ENCODE measurements at regions of chr11 and their contacts with region 1.

Region 1: GRCh38 chr11:15006139-15006759 is 34.1 kb upstream of the CALCA start:
- DNase-seq: peak in 4 of 5 donors; percentile 30 to 48 (median 39)
- H3K4me3 ChIP-seq: no peak overlapping the region
- H3K4me3 Mint-ChIP-seq: no peak overlapping the region
- H3K27ac ChIP-seq: no peak overlapping the region
- H3K27ac Mint-ChIP-seq: no peak overlapping the region
- H3K4me1 ChIP-seq: no peaks in the 10 kb centered on the region
- H3K4me1 Mint-ChIP-seq: no peaks in the 10 kb centered on the region
- H3K27me3 ChIP-seq: no peaks in the 10 kb centered on the region
- H3K27me3 Mint-ChIP-seq: peaks cover 14 to 26% of the 10 kb centered on the region in 2 donors

Region 2: GRCh38 chr11:14789879-14790484 is 216.3 kb before region 1 on chr11:
- CTCF ChIA-PET with region 1: interaction called, 11 read pairs
- POLR2A ChIA-PET with region 1: no interaction called
- intact Hi-C with region 1: loop called (anchors 1 kb)
- DNase-seq: peak in 4 of 5 donors; percentile 9 to 22 (median 17)
- H3K4me3 ChIP-seq: no peak overlapping the region
- H3K4me3 Mint-ChIP-seq: no peak overlapping the region
- H3K27ac ChIP-seq: no peak overlapping the region
- H3K27ac Mint-ChIP-seq: peak overlapping the region in 4 of 7 donors; percentile 30 to 57 (median 45)
- H3K4me1 ChIP-seq: no peaks in the 10 kb centered on the region
- H3K4me1 Mint-ChIP-seq: peaks cover 0 to 4% (median 2%) of the 10 kb centered on the region in 4 donors
- H3K27me3 ChIP-seq: no peaks in the 10 kb centered on the region
- H3K27me3 Mint-ChIP-seq: no peaks in the 10 kb centered on the region

Region 3: DNA sequence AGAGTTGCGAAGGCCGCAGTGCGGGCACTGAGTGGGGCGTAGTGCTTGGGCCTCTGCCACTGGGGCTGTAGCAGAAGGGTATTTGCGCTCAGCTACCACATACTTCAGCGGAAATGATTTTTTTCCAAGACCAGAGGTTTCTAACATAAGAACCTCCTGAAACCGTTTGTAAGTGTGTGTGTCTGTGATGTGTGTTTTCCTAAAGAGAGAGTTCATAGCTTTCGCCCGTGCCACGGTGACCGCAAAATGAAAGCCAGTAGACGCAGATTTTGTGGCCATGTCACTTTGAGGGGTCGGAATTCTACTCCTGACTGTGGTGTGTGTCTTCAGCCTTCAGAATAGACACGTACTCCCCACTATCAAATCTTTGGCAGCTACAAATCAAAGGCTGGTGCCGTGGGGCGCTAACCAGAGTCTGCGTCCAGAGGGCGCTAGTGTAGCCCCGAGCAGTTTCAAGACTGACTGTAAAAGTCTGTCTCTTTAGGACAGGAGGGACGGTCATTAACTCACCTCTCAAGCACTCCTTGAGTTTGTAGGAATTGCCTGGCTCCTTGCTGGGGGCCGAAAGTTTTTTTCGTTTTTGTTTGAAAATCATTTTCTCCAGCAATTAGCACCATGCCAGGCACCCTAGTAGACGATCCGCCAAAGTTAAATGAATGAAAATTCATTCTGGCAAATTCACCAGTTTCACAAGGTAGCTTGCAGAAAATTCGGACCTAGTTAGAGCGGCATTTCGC is 31.6 kb before region 1 on chr11:
- CTCF ChIA-PET with region 1: interaction called, 21 read pairs
- POLR2A ChIA-PET with region 1: no interaction called
- intact Hi-C with region 1: no loop called
- DNase-seq: peak; percentile 42 to 56 (median 52)
- H3K4me3 ChIP-seq: peak overlapping the region; percentile 0 to 1
- H3K4me3 Mint-ChIP-seq: peak overlapping the region; percentile 73 to 88 (median 85)
- H3K27ac ChIP-seq: no peak overlapping the region
- H3K27ac Mint-ChIP-seq: peak overlapping the region in 1 of 7 donors; percentile 30
- H3K4me1 ChIP-seq: peaks cover 28% of the 10 kb centered on the region
- H3K4me1 Mint-ChIP-seq: peaks cover 14 to 39% (median 23%) of the 10 kb centered on the region in 4 donors
- H3K27me3 ChIP-seq: peaks cover 48% of the 10 kb centered on the region
- H3K27me3 Mint-ChIP-seq: peaks cover 44 to 45% of the 10 kb centered on the region in 2 donors